Activated T-helper 1 cell treated with anti-CD3 and anti-CD28 coated beads, Interleukin-12 subunit alpha, Interleukin-12 subunit beta, Interleukin-2, Interleukin-4 antibody, amounts not matched to agents 30 ng/mL and 10 ng/mL and 1 ng/mL, durations not matched to agents 14 hours and 24 hours and 36 hours (primary cell): ENCODE measurements at regions of chr11 and their contacts with region 1.

Region 1: GRCh38 chr11:61021661-61022212 is 50.3 kb downstream of the CD6 start:
- DNase-seq: peak; percentile 78
- H3K4me3 Mint-ChIP-seq: peak overlapping the region; percentile 66
- H3K27ac Mint-ChIP-seq: peak overlapping the region; percentile 89
- H3K4me1 Mint-ChIP-seq: peaks cover 65% of the 10 kb centered on the region
- H3K27me3 Mint-ChIP-seq: no peaks in the 10 kb centered on the region

Region 2: GRCh38 chr11:60970369-60970774 is 51.4 kb before region 1 on chr11:
- intact Hi-C with region 1: loop called (anchors 1 kb)
- DNase-seq: peak; percentile 68
- H3K4me3 Mint-ChIP-seq: peak overlapping the region; percentile 47
- H3K27ac Mint-ChIP-seq: no peak overlapping the region
- H3K4me1 Mint-ChIP-seq: peaks cover 43% of the 10 kb centered on the region
- H3K27me3 Mint-ChIP-seq: peaks cover 12% of the 10 kb centered on the region

Region 3: GRCh38 chr11:61004180-61004611 is 17.5 kb before region 1 on chr11:
- intact Hi-C with region 1: loop called (anchors 1 kb)
- DNase-seq: no peak
- H3K4me3 Mint-ChIP-seq: peak overlapping the region; percentile 68
- H3K27ac Mint-ChIP-seq: peak overlapping the region; percentile 87
- H3K4me1 Mint-ChIP-seq: peaks cover 73% of the 10 kb centered on the region
- H3K27me3 Mint-ChIP-seq: no peaks in the 10 kb centered on the region